ENCODE measurements at regions of chr17 and their contacts with region 1.

Region 1: DNA sequence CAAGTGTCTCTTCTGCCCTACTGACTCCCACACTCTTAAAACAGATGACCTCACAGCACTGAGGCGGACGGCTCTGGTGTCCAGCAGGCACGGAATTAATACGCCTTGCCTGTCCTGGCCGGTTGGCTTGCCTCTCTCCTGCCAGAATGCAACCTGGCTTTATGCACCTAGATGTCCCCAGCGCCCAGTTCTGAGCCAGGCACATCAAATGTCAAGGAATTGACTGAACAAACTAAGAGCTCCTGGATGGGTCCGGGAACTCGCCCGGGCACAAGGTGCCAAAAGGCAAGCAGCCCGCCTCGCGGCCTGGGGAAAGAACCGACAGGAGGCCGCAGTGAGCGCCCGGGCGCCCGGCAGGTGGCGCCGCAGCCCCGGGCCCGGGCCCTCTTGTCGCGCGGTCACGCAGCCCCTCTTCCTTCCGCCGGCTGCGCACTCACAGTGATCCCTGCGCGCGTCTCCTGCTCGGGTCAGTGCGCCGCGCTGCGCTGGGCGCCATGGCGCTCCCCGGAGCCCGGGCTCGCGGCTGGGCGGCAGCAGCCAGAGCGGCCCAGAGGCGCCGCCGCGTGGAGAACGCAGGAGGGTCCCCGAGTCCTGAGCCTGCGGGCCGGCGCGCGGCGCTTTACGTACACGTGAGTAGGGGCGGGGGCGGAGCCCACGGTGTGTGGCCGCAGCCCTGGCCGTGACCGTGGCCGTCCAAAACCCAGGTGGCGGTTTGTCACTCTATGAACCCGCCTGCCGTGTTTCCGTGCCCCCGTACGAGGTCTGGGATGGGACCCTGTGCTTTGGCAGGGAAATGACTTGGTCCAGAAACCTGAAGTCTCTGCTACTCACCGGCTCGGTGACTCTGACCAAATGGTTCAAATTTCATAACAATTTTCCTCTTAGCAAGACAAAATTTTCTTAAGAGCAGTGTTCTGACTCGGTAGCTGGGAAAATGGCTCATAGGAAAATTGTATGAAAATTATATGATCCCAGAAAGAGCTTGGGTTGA is at the start of gene RSAD1:
- DNase-seq: peak; percentile 81 to 93
- H3K4me3 ChIP-seq: peak within 1 kb of the TSS; percentile 86
- H3K27ac ChIP-seq: peak within 1 kb of the TSS; percentile 54
- H3K4me1 ChIP-seq: peaks cover 32% of the 10 kb centered on the region
- H3K27me3 ChIP-seq: no peaks in the 10 kb centered on the region
- CTCF ChIP-seq: peak; percentile 83
- total RNA-seq, gene RSAD1: 14.8 and 15.1 TPM in 2 replicates

Region 2: DNA sequence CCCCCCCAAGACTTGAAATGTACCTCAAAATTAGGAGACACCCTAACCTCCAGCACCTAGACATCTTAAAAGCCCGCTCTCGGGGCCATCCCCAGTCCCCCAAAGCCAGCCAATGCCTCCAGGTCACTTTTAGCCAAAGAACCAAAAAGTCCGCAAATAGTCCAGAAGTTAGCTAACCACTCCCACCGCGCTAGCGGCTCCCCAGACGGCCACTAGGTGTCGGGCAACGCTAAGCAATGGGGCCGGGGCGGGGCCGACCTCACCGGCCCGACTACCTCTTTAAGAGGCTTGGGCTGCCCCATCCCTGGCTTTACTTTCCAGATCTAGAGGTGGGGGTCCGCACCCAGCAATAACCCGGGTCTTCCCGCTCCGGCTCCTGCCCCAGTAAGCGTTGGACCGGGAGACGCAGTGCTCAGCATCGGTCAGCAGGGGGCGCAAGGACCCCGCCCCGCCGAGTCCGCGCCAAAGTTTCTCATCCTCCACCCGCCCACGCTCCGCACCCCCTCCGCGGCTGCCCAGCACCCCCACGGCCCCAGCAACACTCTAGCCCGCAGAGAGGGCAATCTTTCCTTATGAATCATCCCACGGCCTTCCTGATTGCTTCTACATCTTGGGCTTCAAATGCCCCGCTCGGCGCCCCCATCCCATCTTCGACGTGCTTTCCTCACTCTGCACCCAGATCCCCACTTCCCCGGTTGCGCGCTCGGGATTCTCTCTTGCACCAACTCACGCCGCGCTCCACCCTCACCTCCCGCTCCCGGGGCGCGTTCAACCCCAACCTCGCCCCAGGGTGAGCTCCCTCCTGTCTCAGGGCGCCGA is 278.0 kb before region 1 on chr17:
- CTCF ChIA-PET with region 1: interaction called, 7 read pairs
- POLR2A ChIA-PET with region 1: no interaction called
- intact Hi-C with region 1: loop called (anchors 1 kb)
- DNase-seq: peak; percentile 76 to 91
- H3K4me3 ChIP-seq: peak overlapping the region; percentile 62; the same call in 1 of the 2 replicates
- H3K27ac ChIP-seq: 0 out of 2 replicates have a peak overlapping the region, but pooled peaks have one; percentile 84
- H3K4me1 ChIP-seq: peaks cover 22% of the 10 kb centered on the region
- H3K27me3 ChIP-seq: peaks cover 48% of the 10 kb centered on the region
- CTCF ChIP-seq: peak; percentile 100

Region 3: DNA sequence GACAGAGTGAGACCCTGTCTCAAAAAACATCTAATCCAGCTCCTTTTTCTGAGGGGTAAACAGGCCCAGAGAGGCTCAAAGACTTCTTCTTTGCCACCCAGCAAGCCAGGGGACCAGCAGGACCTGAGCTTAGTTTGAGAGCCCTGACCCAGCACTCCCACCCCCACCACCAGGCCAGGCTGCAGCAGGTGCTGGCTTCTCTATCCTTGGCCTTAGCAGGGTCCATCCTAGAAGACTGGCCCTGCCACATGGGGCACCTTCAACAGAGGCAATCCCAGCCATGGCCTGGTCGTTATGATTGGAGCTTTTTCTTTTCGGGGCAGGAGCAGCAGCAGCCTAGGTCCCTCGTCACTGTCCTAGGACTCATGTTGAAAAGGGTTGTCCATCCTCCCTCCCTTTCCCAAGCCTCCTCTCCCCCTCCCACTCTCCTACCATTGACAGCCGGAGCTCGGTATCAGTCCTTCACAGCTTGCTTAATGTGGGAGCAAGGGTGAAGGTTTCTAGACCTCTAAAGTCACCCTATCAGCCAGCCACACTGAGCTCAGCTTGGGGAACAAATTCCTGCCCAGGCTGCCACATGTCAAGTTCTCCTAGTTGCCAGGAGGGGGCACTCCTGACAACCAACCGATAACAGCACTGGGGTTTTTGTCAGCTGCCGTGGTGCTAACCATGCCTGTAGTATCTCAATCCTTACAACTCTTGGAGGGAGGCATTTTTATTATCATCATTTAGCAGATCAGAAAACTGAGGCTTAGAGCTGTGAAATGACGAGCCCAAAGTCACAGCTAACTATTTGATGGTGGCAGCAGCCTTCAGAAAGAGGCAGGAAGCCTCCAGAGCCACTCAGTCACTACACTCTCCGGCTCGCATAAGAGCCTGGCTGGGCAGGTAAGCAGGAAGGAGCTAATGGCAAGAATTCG is 116.9 kb before region 1 on chr17:
- CTCF ChIA-PET with region 1: interaction called, 6 read pairs
- POLR2A ChIA-PET with region 1: no interaction called
- intact Hi-C with region 1: loop called (anchors 1 kb)
- DNase-seq: peak; percentile 46 to 56
- H3K4me3 ChIP-seq: no peak overlapping the region
- H3K27ac ChIP-seq: no peak overlapping the region
- H3K4me1 ChIP-seq: no peaks in the 10 kb centered on the region
- H3K27me3 ChIP-seq: no peaks in the 10 kb centered on the region
- CTCF ChIP-seq: peak; percentile 92

Region 4: GRCh38 chr17:50501054-50501453 is 22.4 kb after region 1 on chr17:
- CTCF ChIA-PET with region 1: interaction called, 13 read pairs
- POLR2A ChIA-PET with region 1: no interaction called
- intact Hi-C with region 1: loop called (anchors 1 kb)
- DNase-seq: no peak
- H3K4me3 ChIP-seq: no peak overlapping the region
- H3K27ac ChIP-seq: no peak overlapping the region
- H3K4me1 ChIP-seq: peaks cover 30% of the 10 kb centered on the region
- H3K27me3 ChIP-seq: no peaks in the 10 kb centered on the region
- CTCF ChIP-seq: peak; percentile 64

Region 5: DNA sequence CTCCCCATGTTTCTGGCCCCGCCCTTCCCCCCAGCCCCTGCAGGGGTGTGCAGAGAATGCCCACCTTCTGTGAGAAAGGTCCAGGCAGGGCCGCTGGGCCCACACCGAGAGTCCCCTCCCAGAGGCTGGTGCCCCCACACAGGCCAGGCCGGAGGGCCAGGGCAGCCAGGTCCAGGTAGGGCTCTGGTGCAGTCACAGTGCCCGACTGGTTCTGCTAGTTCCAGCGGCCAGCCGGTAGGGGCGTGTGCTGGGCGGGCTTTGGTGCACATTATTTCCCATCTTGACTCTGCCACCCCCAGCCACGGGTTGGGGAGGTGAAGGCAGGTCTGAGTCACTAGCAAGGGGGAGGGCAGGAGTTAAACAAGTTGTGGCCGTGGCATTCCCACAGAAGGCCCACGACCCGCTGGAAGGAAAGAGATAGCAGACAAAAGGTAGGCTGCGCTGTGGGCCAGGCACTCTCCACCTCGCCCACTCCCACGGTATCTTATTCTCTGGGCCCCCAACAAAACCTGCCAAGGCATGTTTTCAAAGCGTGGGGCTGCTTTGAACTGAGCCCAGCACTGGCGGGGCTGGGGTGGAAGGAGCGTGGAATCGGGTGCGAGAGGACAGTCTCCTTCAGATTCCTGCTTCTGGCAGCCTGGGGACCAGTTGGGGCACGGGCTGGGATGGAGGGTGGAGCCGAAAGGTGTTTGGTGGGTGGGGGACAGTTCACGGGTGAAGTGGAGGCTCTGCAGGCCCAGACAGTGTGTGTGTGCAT is 55.7 kb after region 1 on chr17:
- CTCF ChIA-PET with region 1: no interaction called
- POLR2A ChIA-PET with region 1: no interaction called
- intact Hi-C with region 1: loop called (anchors 1 kb)
- DNase-seq: peak; percentile 79 to 82
- H3K4me3 ChIP-seq: peak overlapping the region; percentile 89
- H3K27ac ChIP-seq: peak overlapping the region; percentile 51
- H3K4me1 ChIP-seq: peaks cover 42% of the 10 kb centered on the region
- H3K27me3 ChIP-seq: no peaks in the 10 kb centered on the region
- CTCF ChIP-seq: peak; percentile 72; the same call in 1 of the 2 replicates

Region 6: GRCh38 chr17:50749245-50749644 is 270.6 kb after region 1 on chr17:
- CTCF ChIA-PET with region 1: no interaction called
- POLR2A ChIA-PET with region 1: no interaction called
- intact Hi-C with region 1: no loop called
- DNase-seq: no peak
- H3K4me3 ChIP-seq: no peak overlapping the region
- H3K27ac ChIP-seq: no peak overlapping the region
- H3K4me1 ChIP-seq: no peaks in the 10 kb centered on the region
- H3K27me3 ChIP-seq: no peaks in the 10 kb centered on the region
- CTCF ChIP-seq: no peak

Region 7: DNA sequence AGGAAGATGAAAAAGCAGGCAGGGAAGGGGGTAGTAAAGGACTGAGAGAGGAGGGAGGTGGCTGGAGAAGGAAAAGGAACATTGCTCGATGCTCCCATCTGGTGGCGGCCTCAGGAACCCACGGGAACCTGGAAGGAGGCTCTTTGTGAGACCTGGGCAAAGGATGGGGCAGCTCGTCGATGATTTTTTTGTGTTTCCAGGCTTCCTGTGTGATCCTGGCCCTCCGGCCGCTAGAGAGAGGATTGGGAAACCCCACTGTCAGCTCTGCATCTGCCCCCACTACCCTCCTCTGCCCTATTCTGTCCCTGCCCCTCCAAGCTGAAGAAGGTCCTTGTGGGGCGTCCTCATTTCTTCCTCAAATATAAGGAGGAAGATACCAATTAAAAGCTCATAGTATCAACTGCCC is 363.3 kb after region 1 on chr17:
- CTCF ChIA-PET with region 1: no interaction called
- POLR2A ChIA-PET with region 1: no interaction called
- intact Hi-C with region 1: loop called (anchors 1 kb)
- DNase-seq: peak; percentile 43 to 76
- H3K4me3 ChIP-seq: no peak overlapping the region
- H3K27ac ChIP-seq: no peak overlapping the region
- H3K4me1 ChIP-seq: peaks cover 18% of the 10 kb centered on the region
- H3K27me3 ChIP-seq: no peaks in the 10 kb centered on the region
- CTCF ChIP-seq: peak; percentile 83